ENCODE measurements at regions of chr20 and their contacts with region 1.

Region 1: DNA sequence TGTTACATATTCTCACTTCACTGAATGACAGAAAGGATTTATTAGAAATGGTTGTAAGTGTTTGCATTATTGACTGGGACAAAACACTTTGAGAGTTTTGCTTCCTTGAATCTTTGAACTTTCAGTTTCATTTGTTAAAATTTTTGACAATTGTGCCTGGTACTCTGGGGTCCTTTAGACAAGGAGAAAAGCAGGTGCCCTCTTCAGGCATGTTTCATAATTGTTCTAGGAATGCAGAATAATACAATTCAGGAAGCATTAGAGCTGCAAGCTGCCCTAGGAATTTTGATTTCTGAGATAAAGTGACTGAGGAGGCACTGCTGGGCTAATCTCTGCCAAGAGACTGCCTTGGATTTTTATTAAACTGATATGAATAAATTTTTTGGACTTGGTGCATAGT is 49.7 kb downstream of the TOP1 start:
- DNase-seq: no peak
- H3K4me3 Mint-ChIP-seq: no peak overlapping the region
- H3K27ac Mint-ChIP-seq: peak overlapping the region; percentile 30
- H3K4me1 Mint-ChIP-seq: peaks cover 65% of the 10 kb centered on the region
- H3K27me3 Mint-ChIP-seq: no peaks in the 10 kb centered on the region

Region 2: GRCh38 chr20:40970201-40970600 is 108.1 kb before region 1 on chr20:
- CTCF ChIA-PET with region 1: interaction called, 11 read pairs
- POLR2A ChIA-PET with region 1: interaction called, 3 read pairs
- DNase-seq: no peak
- H3K4me3 Mint-ChIP-seq: no peak overlapping the region
- H3K27ac Mint-ChIP-seq: no peak overlapping the region
- H3K4me1 Mint-ChIP-seq: peaks cover 12% of the 10 kb centered on the region
- H3K27me3 Mint-ChIP-seq: peaks cover 40% of the 10 kb centered on the region

Region 3: DNA sequence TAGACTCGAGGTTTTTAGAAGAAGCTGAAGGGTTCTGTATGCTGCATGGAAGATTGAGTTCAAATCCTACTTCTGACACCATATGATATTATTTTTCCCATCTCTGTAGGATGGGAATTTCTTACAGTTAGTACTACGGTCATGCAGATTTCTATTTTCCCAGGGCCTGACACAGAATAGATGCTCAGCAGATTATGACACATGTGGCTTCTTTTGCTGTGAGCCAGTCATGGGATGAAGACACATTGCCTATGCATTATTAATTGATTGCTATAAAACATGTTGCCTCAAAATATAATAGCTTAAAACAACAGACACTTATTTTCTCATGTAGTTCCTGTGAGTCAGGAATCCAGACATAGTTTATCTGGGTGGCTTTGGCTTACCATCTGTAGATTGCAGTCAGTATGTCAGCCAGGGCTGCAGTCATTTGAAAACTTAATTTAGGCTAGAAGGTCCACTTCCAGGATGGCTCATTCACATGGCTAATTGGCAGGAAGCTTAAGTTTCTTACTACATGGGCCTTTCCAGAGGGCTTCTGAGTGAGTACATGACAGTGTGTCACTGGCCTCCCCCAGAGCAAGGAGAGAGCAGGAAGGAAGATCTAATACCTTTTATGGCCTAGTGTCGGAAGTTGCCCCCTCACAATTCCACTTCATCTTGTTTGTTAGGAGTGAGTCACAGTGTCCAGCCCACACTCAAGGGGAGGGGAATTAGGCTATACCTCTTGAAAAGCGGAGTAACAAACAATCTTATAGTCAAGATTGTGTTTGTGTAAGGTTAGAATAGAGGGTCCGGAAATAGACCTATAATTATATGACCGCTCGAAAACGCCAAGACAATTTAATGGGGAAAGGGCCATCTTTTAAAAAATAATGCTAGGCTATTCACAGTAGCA is 20.1 kb before region 1 on chr20:
- CTCF ChIA-PET with region 1: no interaction called
- POLR2A ChIA-PET with region 1: no interaction called
- DNase-seq: no peak
- H3K4me3 Mint-ChIP-seq: no peak overlapping the region
- H3K27ac Mint-ChIP-seq: no peak overlapping the region
- H3K4me1 Mint-ChIP-seq: peaks cover 33% of the 10 kb centered on the region
- H3K27me3 Mint-ChIP-seq: no peaks in the 10 kb centered on the region

Measured in activated CD4-positive, alpha-beta memory T cell treated with anti-CD3 and anti-CD28 coated beads, Interleukin-2, amount 10 ng/mL, durations not matched to agents 7 days and 5 days (primary cell).